Colonic mucosa (tissue), 4 donors: ENCODE measurements at regions of chr18 and their contacts with region 1.

Region 1: GRCh38 chr18:56967035-56967434 is 179.9 kb upstream of the BOD1L2 start:
- DNase-seq: no peak
- H3K4me3 ChIP-seq: no peak overlapping the region
- H3K27ac ChIP-seq: no peak overlapping the region
- H3K4me1 ChIP-seq: no peaks in the 10 kb centered on the region
- H3K27me3 ChIP-seq: no peaks in the 10 kb centered on the region
- CTCF ChIP-seq: no peak

Region 2: GRCh38 chr18:56844556-56844955 is 122.5 kb before region 1 on chr18:
- intact Hi-C with region 1: no loop called
- DNase-seq: no peak
- H3K4me3 ChIP-seq: no peak overlapping the region
- H3K27ac ChIP-seq: no peak overlapping the region
- H3K4me1 ChIP-seq: no peaks in the 10 kb centered on the region
- H3K27me3 ChIP-seq: no peaks in the 10 kb centered on the region
- CTCF ChIP-seq: no peak

Region 3: GRCh38 chr18:56910967-56911366 is 56.1 kb before region 1 on chr18:
- intact Hi-C with region 1: no loop called
- DNase-seq: no peak
- H3K4me3 ChIP-seq: no peak overlapping the region
- H3K27ac ChIP-seq: no peak overlapping the region
- H3K4me1 ChIP-seq: no peaks in the 10 kb centered on the region
- H3K27me3 ChIP-seq: no peaks in the 10 kb centered on the region
- CTCF ChIP-seq: no peak

Region 4: DNA sequence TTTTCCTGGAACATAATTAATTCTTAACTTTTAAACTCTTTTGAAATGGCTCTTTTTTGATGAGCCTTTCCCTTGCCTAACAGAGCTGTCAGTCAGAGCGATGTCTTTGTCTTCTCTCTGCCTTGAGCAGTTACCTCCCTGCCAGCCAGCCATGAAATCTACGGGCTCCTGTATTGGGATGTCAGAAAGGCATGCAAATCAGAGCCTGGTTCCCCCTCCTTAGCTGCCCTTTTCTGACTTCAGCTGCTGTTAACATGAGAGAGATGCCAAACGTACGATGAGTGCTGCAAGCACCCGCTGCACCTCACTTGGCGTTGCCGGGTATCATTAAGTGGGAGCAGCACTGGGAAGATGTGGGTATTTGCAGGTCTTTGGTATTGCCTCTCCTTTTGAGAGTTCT is 48.4 kb after region 1 on chr18:
- intact Hi-C with region 1: loop called (anchors 5 kb)
- DNase-seq: no peak
- H3K4me3 ChIP-seq: no peak overlapping the region
- H3K27ac ChIP-seq: no peak overlapping the region
- H3K4me1 ChIP-seq: no peaks in the 10 kb centered on the region
- H3K27me3 ChIP-seq: no peaks in the 10 kb centered on the region
- CTCF ChIP-seq: no peak